Stomach (tissue), 19 donors: ENCODE measurements at regions of chr7 and their contacts with region 1.

Region 1: GRCh38 chr7:151368136-151368571 is 26.5 kb downstream of the NUB1 start:
- DNase-seq: peak; percentile 89 to 94
- H3K4me3 ChIP-seq: no peak overlapping the region
- H3K27ac ChIP-seq: peak overlapping the region in 3 of 5 donors; percentile 66 to 80 (median 73)
- H3K4me1 ChIP-seq: peaks cover 0 to 32% (median 12%) of the 10 kb centered on the region in 4 donors
- H3K27me3 ChIP-seq: no peaks in the 10 kb centered on the region
- CTCF ChIP-seq: peak in 5 of 7 experiments; percentile 89 to 98 (median 94)
- EP300 ChIP-seq: no peak
- POLR2A ChIP-seq: no peak

Region 2: GRCh38 chr7:151448261-151449252 is 80.4 kb after region 1 on chr7:
- intact Hi-C with region 1: loop called (anchors 5 kb)
- DNase-seq: peak; percentile 75 to 89
- H3K4me3 ChIP-seq: peak overlapping the region; percentile 51 to 66 (median 54)
- H3K27ac ChIP-seq: peak overlapping the region in 4 of 5 donors; percentile 38 to 83 (median 49)
- H3K4me1 ChIP-seq: peaks cover 0 to 14% (median 10%) of the 10 kb centered on the region in 4 donors
- H3K27me3 ChIP-seq: peaks cover 0 to 17% (median 4%) of the 10 kb centered on the region in 3 donors
- CTCF ChIP-seq: peak in 5 of 7 experiments; percentile 68 to 84 (median 79)
- EP300 ChIP-seq: no peak
- POLR2A ChIP-seq: no peak

Region 3: DNA sequence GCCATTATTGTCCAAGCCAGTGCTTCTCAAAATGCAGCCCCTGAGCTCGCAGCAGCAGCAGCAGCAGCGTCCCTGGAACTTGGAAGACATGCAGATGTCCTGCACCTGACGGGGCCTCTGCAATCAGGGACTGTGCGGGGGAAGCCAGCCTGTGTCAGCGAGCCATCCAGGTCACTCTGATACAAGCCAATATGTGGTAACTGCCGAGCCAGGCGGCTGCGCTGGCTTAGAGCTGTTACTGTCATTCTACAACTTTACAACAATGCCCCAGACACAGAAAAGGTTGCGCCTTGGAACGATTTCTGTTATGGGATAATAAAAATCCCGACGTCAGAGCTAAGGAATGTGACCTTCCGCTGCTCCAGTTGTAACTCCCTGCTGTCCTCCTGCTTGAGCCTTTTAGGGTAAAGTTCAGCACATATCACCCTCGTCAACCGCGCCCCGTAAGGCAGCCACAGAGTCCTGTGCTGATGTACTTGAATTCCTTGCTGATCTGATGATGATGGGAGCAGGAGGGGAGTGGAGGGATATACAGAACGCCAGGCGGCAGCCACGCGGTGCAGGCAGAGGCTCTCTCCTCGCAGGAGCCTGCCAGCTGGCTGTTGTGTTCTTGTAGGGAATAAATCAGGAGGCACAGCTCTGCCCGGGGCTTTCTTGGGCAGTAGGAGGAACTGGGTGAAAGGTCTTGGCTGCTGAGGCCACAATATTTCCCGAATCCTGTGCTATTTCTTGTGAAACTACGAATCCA is 91.7 kb after region 1 on chr7:
- intact Hi-C with region 1: no loop called
- DNase-seq: peak; percentile 73 to 92
- H3K4me3 ChIP-seq: peak overlapping the region; percentile 0 to 23 (median 8)
- H3K27ac ChIP-seq: peak overlapping the region in 4 of 5 donors; percentile 73 to 95 (median 84)
- H3K4me1 ChIP-seq: peaks cover 14 to 32% (median 26%) of the 10 kb centered on the region in 4 donors
- H3K27me3 ChIP-seq: no peaks in the 10 kb centered on the region
- CTCF ChIP-seq: peak in 1 of 7 experiments; percentile 21
- EP300 ChIP-seq: peak; percentile 87
- POLR2A ChIP-seq: no peak